H1 (cell line): ENCODE measurements at regions of chr6 and their contacts with region 1.

Region 1: GRCh38 chr6:53679446-53679933 is 13.9 kb upstream of the KLHL31 start:
- DNase-seq: peak in 1 of 2 experiments; percentile 51
- H3K4me3 ChIP-seq: no peak overlapping the region
- H3K27ac ChIP-seq: no peak overlapping the region
- H3K4me1 ChIP-seq: peaks cover 0 to 3% (median 0%) of the 10 kb centered on the region in 4 experiments; a peak in 2 of 7 replicates
- H3K27me3 ChIP-seq: no peaks in the 10 kb centered on the region
- CTCF ChIP-seq: peak in 2 of 3 experiments; percentile 49 to 69; a peak in 3 of 4 replicates
- EP300 ChIP-seq: peak in 1 of 2 experiments; percentile 4; a peak in 1 of 3 replicates
- POLR2A ChIP-seq: no peak
- RAD21 ChIP-seq: peak; percentile 54 to 67

Region 2: DNA sequence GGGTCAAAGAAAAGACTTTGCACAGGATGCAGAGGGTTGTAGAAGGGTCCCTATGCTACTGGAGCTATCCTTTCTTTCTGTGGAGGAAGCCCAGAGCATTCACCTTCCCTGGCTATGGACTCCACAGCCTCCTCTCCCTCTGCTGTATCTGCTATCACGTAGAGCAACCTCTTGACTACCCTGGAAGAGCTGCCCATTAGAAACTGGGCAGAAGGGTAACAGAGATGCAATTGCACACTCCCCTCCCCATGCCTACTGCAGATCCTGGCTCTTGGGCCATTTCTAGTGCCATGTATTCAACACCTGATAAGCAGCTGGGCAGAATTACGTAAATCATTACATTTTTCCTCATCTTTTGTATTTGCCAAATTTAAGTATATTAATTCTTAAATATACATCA is 17.0 kb before region 1 on chr6:
- CTCF ChIA-PET with region 1: interaction called, 10 read pairs
- POLR2A ChIA-PET with region 1: no interaction called
- DNase-seq: no peak
- H3K4me3 ChIP-seq: no peak overlapping the region
- H3K27ac ChIP-seq: no peak overlapping the region
- H3K4me1 ChIP-seq: no peaks in the 10 kb centered on the region
- H3K27me3 ChIP-seq: no peaks in the 10 kb centered on the region
- CTCF ChIP-seq: no peak
- EP300 ChIP-seq: no peak
- POLR2A ChIP-seq: no peak
- RAD21 ChIP-seq: no peak

Region 3: DNA sequence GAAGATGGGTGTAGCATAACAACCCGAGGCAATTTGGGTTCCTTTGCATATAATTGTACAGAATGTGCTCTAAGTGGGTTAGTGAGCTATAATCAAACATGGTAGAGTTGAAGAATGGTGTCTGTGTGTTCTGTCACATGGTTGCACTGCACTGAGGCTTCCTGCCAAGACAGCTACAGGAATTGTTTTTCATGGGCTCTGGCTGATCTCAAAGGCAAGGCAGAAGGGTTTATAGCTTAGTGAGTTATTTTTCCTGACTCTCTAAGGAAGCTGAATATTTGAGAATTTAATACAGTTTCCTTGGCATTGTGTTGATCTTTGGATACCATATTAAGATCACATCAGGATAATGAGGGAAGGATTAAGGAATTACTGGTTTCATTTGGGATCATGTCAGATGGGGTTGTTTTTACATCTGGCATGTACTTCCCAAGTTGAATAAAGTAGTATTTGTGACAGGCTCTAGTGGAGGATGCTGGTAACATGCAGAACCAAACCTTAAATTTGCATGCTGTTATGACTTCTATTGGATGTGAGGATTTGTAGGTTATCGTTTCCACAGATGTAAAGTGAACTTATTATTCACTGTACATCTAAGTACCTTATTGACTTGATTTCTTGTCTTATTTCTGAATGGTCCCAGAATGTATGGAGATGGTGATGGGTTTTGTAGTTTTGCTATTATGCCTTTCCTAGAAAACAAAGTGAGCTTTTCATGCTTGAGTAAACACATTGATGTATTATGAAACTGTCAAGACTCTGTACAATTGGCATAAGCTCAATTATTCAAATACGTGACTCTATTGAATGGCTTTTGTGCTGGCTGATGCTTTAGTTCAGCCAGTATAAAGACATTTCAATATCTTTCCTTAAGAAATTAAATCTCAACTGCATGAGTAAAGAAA is 158.6 kb after region 1 on chr6:
- CTCF ChIA-PET with region 1: no interaction called
- POLR2A ChIA-PET with region 1: no interaction called
- DNase-seq: no peak
- H3K4me3 ChIP-seq: no peak overlapping the region
- H3K27ac ChIP-seq: no peak overlapping the region
- H3K4me1 ChIP-seq: 0 out of 7 replicates have a peak, but pooled peaks cover 0 to 2% (median 0%) of the 10 kb centered on the region in 4 experiments
- H3K27me3 ChIP-seq: no peaks in the 10 kb centered on the region
- CTCF ChIP-seq: no peak
- EP300 ChIP-seq: no peak
- POLR2A ChIP-seq: no peak
- RAD21 ChIP-seq: no peak